Adrenal gland (tissue), 19 donors: ENCODE measurements at regions of chr15 and their contacts with region 1.

Region 1: GRCh38 chr15:98799461-98800390 is 151.4 kb downstream of the IGF1R start:
- DNase-seq: peak in 4 of 7 donors; percentile 42 to 45 (median 44)
- H3K4me3 ChIP-seq: peak overlapping the region in 1 of 4 donors; percentile 1
- H3K27ac ChIP-seq: peak overlapping the region; percentile 26 to 70 (median 48)
- H3K4me1 ChIP-seq: peaks cover 29 to 44% of the 10 kb centered on the region in 2 donors
- H3K27me3 ChIP-seq: no peaks in the 10 kb centered on the region
- CTCF ChIP-seq: no peak
- POLR2A ChIP-seq: no peak

Region 2: GRCh38 chr15:98845107-98845884 is 45.6 kb after region 1 on chr15:
- intact Hi-C with region 1: loop called in 1 of 2 experiments (anchors 10 kb)
- DNase-seq: peak in 1 of 7 donors; percentile 21
- H3K4me3 ChIP-seq: no peak overlapping the region
- H3K27ac ChIP-seq: peak overlapping the region in 2 of 5 donors; percentile 13 to 20
- H3K4me1 ChIP-seq: peaks cover 14 to 57% of the 10 kb centered on the region in 2 donors
- H3K27me3 ChIP-seq: no peaks in the 10 kb centered on the region
- CTCF ChIP-seq: no peak
- POLR2A ChIP-seq: no peak

Region 3: DNA sequence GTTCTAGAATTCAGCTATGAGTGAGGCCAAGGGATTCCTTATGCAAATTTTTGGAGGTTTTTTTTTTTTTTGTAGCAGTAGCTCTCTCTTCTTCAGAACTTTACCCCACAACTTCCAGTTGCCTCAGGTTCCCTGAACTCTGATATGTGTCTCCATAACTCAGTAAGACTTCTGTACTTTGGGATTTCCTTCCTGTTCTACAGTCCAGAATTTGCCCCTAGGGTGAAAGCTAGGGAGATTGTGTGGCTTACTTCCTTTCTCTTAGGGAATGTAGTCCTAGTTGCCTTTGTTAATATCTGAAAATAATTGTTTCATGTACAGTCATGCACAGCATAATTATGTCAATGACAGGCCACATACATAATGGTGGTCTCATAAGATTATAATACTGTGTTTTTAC is 482.4 kb after region 1 on chr15:
- intact Hi-C with region 1: no loop called
- DNase-seq: no peak
- H3K4me3 ChIP-seq: no peak overlapping the region
- H3K27ac ChIP-seq: no peak overlapping the region
- H3K4me1 ChIP-seq: no peaks in the 10 kb centered on the region
- H3K27me3 ChIP-seq: no peaks in the 10 kb centered on the region
- CTCF ChIP-seq: no peak
- POLR2A ChIP-seq: no peak